ENCODE measurements at regions of chr2 and their contacts with region 1.

Region 1: GRCh38 chr2:222939208-222939856 is 78.5 kb downstream of the ACSL3 start:
- DNase-seq: peak; percentile 86
- ATAC-seq: peak; percentile 99
- H3K4me3 Mint-ChIP-seq: no peak overlapping the region
- H3K27ac Mint-ChIP-seq: 0 out of 2 replicates have a peak overlapping the region, but pooled peaks have one; percentile 19
- H3K4me1 Mint-ChIP-seq: peaks cover 12% of the 10 kb centered on the region
- H3K27me3 Mint-ChIP-seq: no peaks in the 10 kb centered on the region
- CTCF ChIP-seq: peak; percentile 54

Region 2: GRCh38 chr2:222707689-222708525 is 231.4 kb before region 1 on chr2:
- CTCF ChIA-PET with region 1: interaction called, 20 read pairs
- POLR2A ChIA-PET with region 1: no interaction called
- DNase-seq: peak; percentile 84
- ATAC-seq: peak; percentile 43; the same call in 1 of the 2 replicates
- H3K4me3 Mint-ChIP-seq: no peak overlapping the region
- H3K27ac Mint-ChIP-seq: no peak overlapping the region
- H3K4me1 Mint-ChIP-seq: peaks cover 40% of the 10 kb centered on the region
- H3K27me3 Mint-ChIP-seq: no peaks in the 10 kb centered on the region
- CTCF ChIP-seq: peak; percentile 90

Region 3: GRCh38 chr2:222912117-222912516 is 27.2 kb before region 1 on chr2:
- CTCF ChIA-PET with region 1: interaction called, 16 read pairs
- POLR2A ChIA-PET with region 1: no interaction called
- DNase-seq: no peak
- ATAC-seq: peak; percentile 20; the same call in 1 of the 2 replicates
- H3K4me3 Mint-ChIP-seq: no peak overlapping the region
- H3K27ac Mint-ChIP-seq: peak overlapping the region; percentile 57
- H3K4me1 Mint-ChIP-seq: peaks cover 83% of the 10 kb centered on the region
- H3K27me3 Mint-ChIP-seq: no peaks in the 10 kb centered on the region
- CTCF ChIP-seq: no peak

Region 4: DNA sequence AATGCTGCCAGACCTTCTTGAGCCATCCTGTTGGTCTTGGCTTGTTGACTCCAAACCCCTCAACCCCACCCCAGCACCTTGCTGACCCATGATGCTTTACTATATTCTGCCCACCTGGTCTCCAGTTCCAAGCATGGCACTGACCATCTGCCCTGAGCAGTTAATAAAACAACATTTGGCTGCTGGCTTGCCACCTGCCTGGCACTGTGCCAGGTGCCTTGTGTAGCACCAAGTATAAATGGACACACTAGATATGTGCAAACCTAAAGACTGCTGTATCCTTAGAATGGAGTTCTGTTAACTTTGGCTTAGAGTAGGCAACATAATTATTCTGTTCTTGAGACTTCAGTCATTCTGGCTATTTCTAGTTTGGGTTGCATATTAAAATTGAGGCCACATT is 12.9 kb after region 1 on chr2:
- CTCF ChIA-PET with region 1: interaction called, 14 read pairs
- POLR2A ChIA-PET with region 1: no interaction called
- DNase-seq: no peak
- ATAC-seq: no peak
- H3K4me3 Mint-ChIP-seq: no peak overlapping the region
- H3K27ac Mint-ChIP-seq: no peak overlapping the region
- H3K4me1 Mint-ChIP-seq: no peaks in the 10 kb centered on the region
- H3K27me3 Mint-ChIP-seq: no peaks in the 10 kb centered on the region
- CTCF ChIP-seq: no peak

Measured in WTC11 (cell line).